ENCODE measurements at regions of chr13 and their contacts with region 1.

Region 1: GRCh38 chr13:21476893-21477472 is 17.9 kb upstream of the ZDHHC20 start:
- DNase-seq: peak; percentile 57 to 70
- ATAC-seq: peak; percentile 43 to 76
- H3K4me3 ChIP-seq: peak overlapping the region; percentile 46 to 61 (median 56)
- H3K27ac ChIP-seq: peak overlapping the region in 3 of 4 donors; percentile 28 to 41 (median 37)
- H3K4me1 ChIP-seq: peaks cover 16 to 19% of the 10 kb centered on the region in 2 donors
- H3K27me3 ChIP-seq: no peaks in the 10 kb centered on the region
- CTCF ChIP-seq: peak; percentile 83 to 99 (median 88)
- POLR2A ChIP-seq: no peak

Region 2: DNA sequence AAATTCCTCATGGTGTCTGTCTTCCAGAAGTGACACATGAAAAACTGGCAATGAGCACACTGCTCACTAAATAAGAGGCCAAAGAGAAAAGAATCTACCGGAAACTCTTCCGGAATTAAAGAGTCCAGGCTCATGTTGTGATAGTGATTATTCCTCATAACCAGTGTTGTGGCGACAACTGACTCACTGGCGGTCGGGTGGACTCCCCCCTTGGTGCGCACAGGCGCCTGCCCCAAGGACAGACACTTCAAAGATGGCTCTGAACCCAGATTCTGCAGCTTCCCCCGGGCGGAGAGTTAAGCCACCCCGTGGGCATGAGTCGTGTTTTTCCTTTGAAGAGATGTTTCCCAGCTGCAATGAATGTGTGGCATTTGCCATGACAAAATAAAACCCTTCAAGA is 763.2 kb before region 1 on chr13:
- in situ Hi-C with region 1: no loop called
- intact Hi-C with region 1: loop called (anchors 5 kb)
- DNase-seq: peak in 1 of 2 donors; percentile 42
- ATAC-seq: no peak
- H3K4me3 ChIP-seq: peak overlapping the region in 3 of 4 donors; percentile 38 to 56 (median 47)
- H3K27ac ChIP-seq: peak overlapping the region; percentile 80 to 89 (median 88)
- H3K4me1 ChIP-seq: peaks cover 46 to 56% of the 10 kb centered on the region in 2 donors
- H3K27me3 ChIP-seq: no peaks in the 10 kb centered on the region
- CTCF ChIP-seq: no peak
- POLR2A ChIP-seq: peak in 1 of 2 donors; percentile 13

Region 3: GRCh38 chr13:20940083-20940880 is 536.7 kb before region 1 on chr13:
- in situ Hi-C with region 1: loop called (anchors 5 to 25 kb)
- intact Hi-C with region 1: loop called (anchors 1 kb)
- DNase-seq: no peak
- ATAC-seq: no peak
- H3K4me3 ChIP-seq: no peak overlapping the region
- H3K27ac ChIP-seq: peak overlapping the region; percentile 73 to 91 (median 80)
- H3K4me1 ChIP-seq: peaks cover 20 to 24% of the 10 kb centered on the region in 2 donors
- H3K27me3 ChIP-seq: no peaks in the 10 kb centered on the region
- CTCF ChIP-seq: no peak
- POLR2A ChIP-seq: no peak

Region 4: DNA sequence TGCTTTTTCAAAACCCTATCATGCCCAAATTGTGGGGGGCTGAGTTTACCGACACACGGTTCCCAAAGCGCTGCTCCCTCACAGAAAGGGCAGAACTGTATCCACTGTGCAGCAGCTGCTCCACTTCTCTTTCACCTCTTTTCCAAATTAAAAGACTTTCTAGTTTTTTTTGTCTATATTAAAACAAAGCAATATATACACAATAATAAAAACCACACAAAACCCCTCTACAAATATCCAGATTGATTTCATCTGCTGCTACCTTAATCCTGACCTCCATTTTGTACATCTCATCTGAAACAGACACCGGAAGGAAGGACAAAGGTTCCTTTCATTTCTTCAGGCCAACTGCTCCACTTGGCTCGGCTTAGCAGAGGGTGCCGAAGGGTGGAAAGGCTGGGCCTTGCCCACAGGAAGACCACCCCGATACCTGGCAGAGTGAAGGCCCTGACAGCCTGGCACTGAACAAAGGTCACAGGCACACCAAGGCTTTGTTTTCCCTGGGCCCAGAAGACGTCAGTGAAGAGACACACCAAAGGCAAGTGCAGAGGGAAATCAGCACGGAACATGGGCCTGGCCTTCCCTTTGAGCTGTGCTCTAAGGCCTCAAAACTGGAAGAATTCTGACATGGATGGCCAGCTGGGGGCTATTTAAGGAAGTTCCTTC is 487.2 kb before region 1 on chr13:
- in situ Hi-C with region 1: no loop called
- intact Hi-C with region 1: loop called (anchors 5 kb)
- DNase-seq: no peak
- ATAC-seq: no peak
- H3K4me3 ChIP-seq: no peak overlapping the region
- H3K27ac ChIP-seq: peak overlapping the region; percentile 71 to 90 (median 82)
- H3K4me1 ChIP-seq: peaks cover 16 to 19% of the 10 kb centered on the region in 2 donors
- H3K27me3 ChIP-seq: no peaks in the 10 kb centered on the region
- CTCF ChIP-seq: no peak
- POLR2A ChIP-seq: no peak

Region 5: GRCh38 chr13:21115231-21115630 is 361.8 kb before region 1 on chr13:
- in situ Hi-C with region 1: loop called (anchors 5 to 25 kb)
- intact Hi-C with region 1: loop called (anchors 1 kb)
- DNase-seq: no peak
- ATAC-seq: no peak
- H3K4me3 ChIP-seq: no peak overlapping the region
- H3K27ac ChIP-seq: no peak overlapping the region
- H3K4me1 ChIP-seq: no peaks in the 10 kb centered on the region
- H3K27me3 ChIP-seq: no peaks in the 10 kb centered on the region
- CTCF ChIP-seq: no peak
- POLR2A ChIP-seq: no peak

Region 6: GRCh38 chr13:21176220-21176982 is 300.6 kb before region 1 on chr13 and contains the starts of genes MRPL57 and SKA3:
- in situ Hi-C with region 1: no loop called
- intact Hi-C with region 1: loop called (anchors 5 kb)
- DNase-seq: peak; percentile 83 to 91
- ATAC-seq: peak; percentile 98
- H3K4me3 ChIP-seq: peak within 1 kb of the TSS; percentile 71 to 97 (median 84)
- H3K27ac ChIP-seq: peak within 1 kb of the TSS; percentile 87 to 95 (median 92)
- H3K4me1 ChIP-seq: peaks cover 12 to 21% of the 10 kb centered on the region in 2 donors
- H3K27me3 ChIP-seq: no peaks in the 10 kb centered on the region
- CTCF ChIP-seq: peak in 3 of 5 experiments; percentile 10 to 51 (median 27)
- POLR2A ChIP-seq: peak; percentile 83 to 85
- total RNA-seq, gene MRPL57: 32.1 to 53.8 (median 47.6) TPM
- total RNA-seq, gene SKA3: 0.13 to 0.24 TPM in 2 of 4 donors, not detected in the others

Region 7: DNA sequence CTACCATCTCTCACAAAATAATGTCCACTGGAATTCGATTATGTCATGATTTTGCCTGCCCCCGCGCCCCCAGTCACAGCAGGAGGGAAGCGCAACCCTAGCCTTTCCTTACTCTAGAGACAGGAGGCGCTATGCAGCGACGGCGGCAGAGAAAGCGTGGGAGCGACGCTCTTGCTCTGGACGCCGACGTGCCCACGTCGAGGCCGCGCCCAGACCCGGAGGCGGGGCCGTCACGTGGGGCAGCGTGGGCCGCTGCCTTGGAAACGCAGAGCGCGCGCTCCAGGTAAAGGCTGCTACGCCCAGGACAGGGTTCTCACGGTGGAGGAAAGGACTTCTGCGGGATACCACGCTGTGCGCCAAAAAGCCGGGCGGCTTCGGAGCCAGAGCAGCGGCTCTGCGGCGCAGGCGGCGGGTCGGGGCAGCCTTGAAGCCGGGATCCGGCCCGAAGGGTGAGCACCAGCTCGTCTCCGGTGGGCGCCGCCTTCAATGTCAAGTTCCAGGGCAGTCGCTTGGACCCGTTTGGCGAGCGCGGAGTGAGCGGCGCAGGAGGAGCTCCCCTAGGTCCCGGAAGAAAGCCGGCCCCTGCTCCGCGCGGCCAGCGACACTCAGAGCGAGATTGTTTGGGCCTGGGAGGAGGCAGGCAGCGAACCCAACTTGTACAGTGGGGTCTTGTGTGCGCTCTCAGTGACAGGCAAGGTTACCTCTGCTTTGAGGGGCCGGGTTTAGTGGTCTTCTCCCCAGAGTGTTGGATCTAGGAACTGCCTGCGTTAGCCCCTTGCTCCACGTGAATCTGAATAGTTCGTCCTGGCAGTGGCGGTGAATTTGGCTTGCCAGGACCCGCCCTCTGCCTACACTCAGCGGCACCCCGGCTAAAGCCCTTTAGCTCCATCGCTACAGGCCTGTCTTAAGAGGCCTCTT is 178.8 kb before region 1 on chr13:
- in situ Hi-C with region 1: loop called in 3 of 4 experiments (anchors 10 kb)
- intact Hi-C with region 1: loop called (anchors 1 kb)
- DNase-seq: peak; percentile 38 to 68
- ATAC-seq: peak; percentile 98 to 99
- H3K4me3 ChIP-seq: peak overlapping the region; percentile 76 to 100 (median 90)
- H3K27ac ChIP-seq: peak overlapping the region; percentile 29 to 65 (median 47)
- H3K4me1 ChIP-seq: peaks cover 11 to 14% of the 10 kb centered on the region in 2 donors
- H3K27me3 ChIP-seq: no peaks in the 10 kb centered on the region
- CTCF ChIP-seq: peak; percentile 78 to 91 (median 80)
- POLR2A ChIP-seq: no peak

Measured in gastrocnemius medialis (tissue), 4 donors.